Esophagus muscularis mucosa (tissue), 4 donors: ENCODE measurements at regions of chr9 and their contacts with region 1.

Region 1: DNA sequence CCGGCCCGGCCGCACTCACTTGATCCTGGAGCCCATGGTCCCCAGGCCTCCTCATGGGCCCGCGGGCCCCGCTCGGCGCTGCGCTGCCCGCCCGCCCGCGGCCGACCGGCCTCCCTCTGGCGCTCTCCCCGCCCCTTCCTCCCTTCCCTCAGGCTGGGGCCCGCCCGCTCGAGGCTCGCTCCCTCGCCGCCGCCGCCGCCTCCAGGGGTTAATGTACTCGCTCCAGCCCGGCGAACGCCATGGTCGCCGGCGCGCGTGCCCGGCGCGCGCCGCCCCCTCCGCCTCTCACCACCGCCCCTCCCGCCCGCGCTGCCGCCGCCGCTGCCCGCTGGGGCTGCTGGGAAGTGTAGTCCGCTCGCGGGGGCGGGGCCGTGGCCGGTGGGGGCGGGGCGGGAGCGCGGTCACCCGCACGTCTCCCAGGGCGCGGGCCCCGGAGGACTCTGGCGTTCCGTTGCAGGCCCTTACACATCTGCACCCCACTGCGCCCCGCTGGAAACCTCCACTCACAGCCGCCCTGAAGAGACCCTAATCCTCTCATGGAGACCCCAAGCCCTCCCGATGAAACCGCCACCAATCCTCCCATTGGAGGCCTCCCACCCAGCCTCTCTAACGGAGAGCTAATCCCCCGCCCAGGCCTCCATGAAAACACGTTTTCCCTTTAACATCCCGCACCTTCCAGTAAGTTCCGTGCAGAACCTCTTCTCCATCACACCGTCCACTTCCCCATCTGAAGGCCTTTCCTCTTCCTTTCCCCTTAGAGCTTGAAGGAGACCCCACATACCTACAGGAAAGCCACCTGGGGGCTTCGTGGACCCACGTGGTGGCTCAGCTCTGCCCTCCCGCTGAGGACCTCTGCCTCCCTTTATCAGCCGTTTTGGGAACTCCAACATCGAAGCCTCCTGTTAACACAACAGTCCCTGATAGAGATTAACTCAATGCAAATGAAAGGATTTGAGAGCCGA is at the start of gene DENND1A:
- DNase-seq: peak; percentile 97
- H3K4me3 ChIP-seq: peak within 1 kb of the TSS; percentile 73 to 86 (median 81)
- H3K27ac ChIP-seq: peak within 1 kb of the TSS; percentile 74 to 79 (median 78)
- H3K4me1 ChIP-seq: peaks cover 15 to 30% (median 28%) of the 10 kb centered on the region in 4 donors
- H3K27me3 ChIP-seq: no peaks in the 10 kb centered on the region
- CTCF ChIP-seq: no peak
- EP300 ChIP-seq: no peak
- POLR2A ChIP-seq: no peak
- total RNA-seq, gene DENND1A: 19.2 to 26.9 (median 24.0) TPM

Region 2: DNA sequence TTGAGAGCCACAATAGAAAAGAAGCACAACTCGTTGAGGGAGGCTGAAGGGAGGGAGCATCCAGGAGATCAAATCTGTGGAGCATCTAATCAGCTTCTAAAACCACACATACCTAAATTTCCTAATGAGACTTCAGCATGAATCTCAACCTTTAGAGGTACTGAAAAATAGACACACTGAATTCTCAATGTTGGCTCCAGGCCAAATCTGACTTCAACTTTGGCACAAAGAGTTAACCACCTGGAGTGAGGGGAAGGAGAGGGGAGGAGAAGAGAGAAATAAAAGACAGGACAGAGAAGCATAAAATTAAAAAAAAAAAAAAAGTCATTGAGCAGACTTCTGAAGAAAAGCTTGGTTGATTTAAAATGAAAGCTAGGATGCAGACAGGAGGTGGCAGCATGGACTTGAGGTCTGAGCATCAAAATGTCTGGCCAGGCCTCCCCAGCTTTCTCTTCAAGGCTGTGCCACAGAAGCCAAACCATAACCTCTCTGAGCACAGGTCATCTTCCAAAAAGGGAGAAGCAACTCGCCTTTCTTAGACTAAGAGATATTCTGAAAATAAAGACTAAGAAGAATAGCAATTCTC is 205.8 kb before region 1 on chr9:
- intact Hi-C with region 1: loop called (anchors 10 kb)
- DNase-seq: no peak
- H3K4me3 ChIP-seq: no peak overlapping the region
- H3K27ac ChIP-seq: no peak overlapping the region
- H3K4me1 ChIP-seq: peaks cover 0 to 16% (median 14%) of the 10 kb centered on the region in 4 donors
- H3K27me3 ChIP-seq: no peaks in the 10 kb centered on the region
- CTCF ChIP-seq: peak; percentile 7 to 19 (median 10)
- EP300 ChIP-seq: no peak
- POLR2A ChIP-seq: no peak